Spleen (tissue), 13 donors: ENCODE measurements at regions of chr1 and their contacts with region 1.

Region 1: DNA sequence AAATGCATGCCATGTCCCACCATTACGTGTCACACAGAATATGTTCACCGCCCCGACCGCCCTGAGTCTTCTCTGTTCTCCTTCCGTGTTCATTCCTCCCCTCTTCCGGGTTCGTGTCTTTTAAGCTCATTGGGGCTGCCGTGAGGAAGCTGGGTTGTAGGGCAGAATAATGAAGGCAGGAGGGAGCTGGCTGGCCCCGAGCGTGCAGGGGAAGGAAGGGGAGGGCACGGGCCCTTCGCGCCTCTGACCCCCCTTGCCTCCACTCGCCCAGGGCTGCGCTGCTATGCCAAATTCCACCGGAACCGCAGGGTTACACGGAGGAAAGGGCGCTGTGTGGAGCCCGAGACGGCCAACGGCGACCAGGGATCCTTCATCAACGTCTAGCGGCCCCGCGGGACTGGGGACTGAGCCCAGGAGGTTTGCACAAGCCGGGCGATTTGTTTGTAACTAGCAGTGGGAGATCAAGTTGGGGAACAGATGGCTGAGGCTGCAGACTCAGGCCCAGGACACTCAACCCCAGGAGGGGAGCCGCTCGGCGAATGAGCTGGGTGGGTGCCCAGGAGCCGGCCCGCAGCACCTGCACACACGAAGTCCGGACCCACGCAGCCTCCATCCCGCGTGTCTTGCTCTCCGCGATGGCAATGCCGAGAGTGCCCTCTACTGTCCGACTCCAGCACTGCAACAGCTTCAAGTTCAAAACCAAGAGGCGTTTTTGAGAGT is 16.5 kb upstream of the AGTRAP start:
- DNase-seq: peak; percentile 97
- H3K4me3 ChIP-seq: peak overlapping the region; percentile 42 to 79 (median 53)
- H3K27ac ChIP-seq: peak overlapping the region; percentile 81 to 94 (median 88)
- H3K4me1 ChIP-seq: peaks cover 10 to 32% (median 19%) of the 10 kb centered on the region in 6 donors
- H3K27me3 ChIP-seq: peaks cover 0 to 14% (median 0%) of the 10 kb centered on the region in 7 donors
- CTCF ChIP-seq: peak; percentile 91 to 99 (median 95)
- POLR2A ChIP-seq: no peak

Region 2: DNA sequence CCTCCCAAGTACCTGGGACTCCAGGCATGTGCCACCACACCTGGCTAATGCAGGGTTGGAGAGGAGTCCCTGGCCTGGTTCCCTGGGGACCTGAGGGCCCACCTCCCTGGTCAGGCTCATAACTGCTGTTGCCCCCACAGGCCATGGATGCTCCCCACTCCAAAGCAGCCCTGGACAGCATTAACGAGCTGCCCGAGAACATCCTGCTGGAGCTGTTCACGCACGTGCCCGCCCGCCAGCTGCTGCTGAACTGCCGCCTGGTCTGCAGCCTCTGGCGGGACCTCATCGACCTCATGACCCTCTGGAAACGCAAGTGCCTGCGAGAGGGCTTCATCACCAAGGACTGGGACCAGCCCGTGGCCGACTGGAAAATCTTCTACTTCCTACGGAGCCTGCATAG is 51.0 kb before region 1 on chr1:
- intact Hi-C with region 1: loop called (anchors 5 kb)
- DNase-seq: no peak
- H3K4me3 ChIP-seq: no peak overlapping the region
- H3K27ac ChIP-seq: no peak overlapping the region
- H3K4me1 ChIP-seq: peaks cover 0 to 59% (median 17%) of the 10 kb centered on the region in 6 donors
- H3K27me3 ChIP-seq: no peaks in the 10 kb centered on the region
- CTCF ChIP-seq: no peak
- POLR2A ChIP-seq: no peak

Region 3: GRCh38 chr1:11967028-11967547 is 247.6 kb after region 1 on chr1:
- intact Hi-C with region 1: no loop called
- DNase-seq: no peak
- H3K4me3 ChIP-seq: no peak overlapping the region
- H3K27ac ChIP-seq: peak overlapping the region in 1 of 8 donors; percentile 11
- H3K4me1 ChIP-seq: no peaks in the 10 kb centered on the region
- H3K27me3 ChIP-seq: no peaks in the 10 kb centered on the region
- CTCF ChIP-seq: peak in 7 of 11 experiments; percentile 8 to 42 (median 33)
- POLR2A ChIP-seq: no peak